ENCODE measurements at regions of chr7 and their contacts with region 1.

Region 1: DNA sequence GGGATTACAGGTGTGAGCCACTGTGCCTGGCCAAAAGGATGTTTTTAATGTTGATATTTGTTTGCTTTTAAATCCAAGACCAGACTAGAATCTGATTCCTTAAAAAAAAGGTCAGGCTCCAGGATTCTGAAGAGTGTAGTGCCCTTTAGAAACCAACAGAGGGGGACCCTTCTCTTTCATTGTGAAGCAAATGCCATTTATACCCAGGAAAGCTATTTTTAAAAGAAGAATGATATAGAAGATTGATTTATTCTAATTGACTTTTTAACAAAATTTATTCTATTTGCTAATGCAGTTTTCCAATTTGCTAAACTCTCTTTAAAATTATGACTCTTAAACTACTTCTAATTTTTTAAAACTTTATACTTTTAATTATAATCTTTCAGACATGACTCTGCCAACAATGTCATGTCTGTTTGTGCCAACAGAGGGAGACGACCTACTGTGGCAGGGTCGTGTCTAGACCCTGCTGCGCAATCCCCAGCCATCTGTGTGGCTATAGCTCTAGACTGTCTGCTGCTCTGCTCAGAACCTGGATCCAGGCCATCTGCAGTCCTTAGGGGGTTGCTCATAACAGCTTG is 201.0 kb upstream of the IMMP2L start:
- DNase-seq: no peak
- H3K4me3 ChIP-seq: no peak overlapping the region
- H3K27ac ChIP-seq: no peak overlapping the region
- H3K4me1 ChIP-seq: peaks cover 0 to 13% (median 0%) of the 10 kb centered on the region in 3 donors
- H3K27me3 ChIP-seq: no peaks in the 10 kb centered on the region
- CTCF ChIP-seq: peak; percentile 15 to 72 (median 55)
- POLR2A ChIP-seq: no peak

Region 2: GRCh38 chr7:111841596-111842205 is 78.4 kb after region 1 on chr7:
- intact Hi-C with region 1: no loop called
- DNase-seq: no peak
- H3K4me3 ChIP-seq: no peak overlapping the region
- H3K27ac ChIP-seq: no peak overlapping the region
- H3K4me1 ChIP-seq: peaks cover 0 to under 1% (median 0%) of the 10 kb centered on the region in 3 donors
- H3K27me3 ChIP-seq: no peaks in the 10 kb centered on the region
- CTCF ChIP-seq: no peak
- POLR2A ChIP-seq: no peak

Region 3: GRCh38 chr7:112192236-112193154 is 429.2 kb after region 1 on chr7:
- intact Hi-C with region 1: loop called (anchors 10 kb)
- DNase-seq: no peak
- H3K4me3 ChIP-seq: no peak overlapping the region
- H3K27ac ChIP-seq: peak overlapping the region in 3 of 4 donors; percentile 0 to 40 (median 30)
- H3K4me1 ChIP-seq: peaks cover 0 to 10% (median 3%) of the 10 kb centered on the region in 3 donors
- H3K27me3 ChIP-seq: no peaks in the 10 kb centered on the region
- CTCF ChIP-seq: no peak
- POLR2A ChIP-seq: no peak

Region 4: GRCh38 chr7:112414855-112415490 is 651.7 kb after region 1 on chr7:
- intact Hi-C with region 1: loop called (anchors 10 kb)
- DNase-seq: no peak
- H3K4me3 ChIP-seq: no peak overlapping the region
- H3K27ac ChIP-seq: no peak overlapping the region
- H3K4me1 ChIP-seq: peaks cover 0 to 13% (median 2%) of the 10 kb centered on the region in 3 donors
- H3K27me3 ChIP-seq: peaks cover 0 to 11% (median 0%) of the 10 kb centered on the region in 4 donors
- CTCF ChIP-seq: peak in 5 of 6 experiments; percentile 49 to 68 (median 51)
- POLR2A ChIP-seq: no peak